Activated naive CD4-positive, alpha-beta T cell treated with anti-CD3 and anti-CD28 coated beads for 36 hours (primary cell): ENCODE measurements at regions of chr19 and their contacts with region 1.

Region 1: GRCh38 chr19:50933640-50934039 is 19.2 kb downstream of the KLK5 start:
- DNase-seq: no peak
- H3K4me3 Mint-ChIP-seq: no peak overlapping the region
- H3K27ac Mint-ChIP-seq: no peak overlapping the region
- H3K4me1 Mint-ChIP-seq: no peaks in the 10 kb centered on the region
- H3K27me3 Mint-ChIP-seq: peaks cover 39% of the 10 kb centered on the region

Region 2: DNA sequence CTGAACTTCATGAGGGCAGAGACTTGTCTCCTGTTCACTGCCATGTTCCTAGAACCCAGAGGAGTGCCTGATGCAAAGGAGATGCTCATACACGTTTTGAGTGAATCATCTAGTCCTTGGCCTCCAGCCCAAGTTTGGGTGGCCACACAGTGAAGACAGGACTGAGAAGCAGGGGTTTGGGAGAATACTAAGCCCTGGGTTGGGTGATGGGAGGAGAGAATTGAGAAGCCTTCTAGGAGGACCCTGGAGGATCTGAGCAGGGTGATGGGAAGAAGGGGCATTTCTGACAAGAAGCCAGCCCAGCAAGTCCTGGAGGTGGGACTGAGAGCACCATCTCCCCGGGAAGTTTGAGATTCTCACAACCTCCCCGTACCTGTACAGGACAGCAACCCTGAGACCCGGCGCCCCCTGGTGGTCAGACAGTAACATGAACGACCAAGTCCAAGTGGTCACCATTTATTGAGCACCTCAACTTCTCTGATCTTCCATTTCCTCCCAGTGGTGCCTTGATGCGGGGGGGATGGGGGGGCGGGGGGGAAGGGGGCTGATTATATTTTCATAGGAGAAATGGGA is 163.6 kb after region 1 on chr19:
- CTCF ChIA-PET with region 1: interaction called, 3 read pairs
- intact Hi-C with region 1: loop called (anchors 1 kb)
- DNase-seq: peak; percentile 83
- H3K4me3 Mint-ChIP-seq: no peak overlapping the region
- H3K27ac Mint-ChIP-seq: no peak overlapping the region
- H3K4me1 Mint-ChIP-seq: peaks cover 32% of the 10 kb centered on the region
- H3K27me3 Mint-ChIP-seq: no peaks in the 10 kb centered on the region

Region 3: DNA sequence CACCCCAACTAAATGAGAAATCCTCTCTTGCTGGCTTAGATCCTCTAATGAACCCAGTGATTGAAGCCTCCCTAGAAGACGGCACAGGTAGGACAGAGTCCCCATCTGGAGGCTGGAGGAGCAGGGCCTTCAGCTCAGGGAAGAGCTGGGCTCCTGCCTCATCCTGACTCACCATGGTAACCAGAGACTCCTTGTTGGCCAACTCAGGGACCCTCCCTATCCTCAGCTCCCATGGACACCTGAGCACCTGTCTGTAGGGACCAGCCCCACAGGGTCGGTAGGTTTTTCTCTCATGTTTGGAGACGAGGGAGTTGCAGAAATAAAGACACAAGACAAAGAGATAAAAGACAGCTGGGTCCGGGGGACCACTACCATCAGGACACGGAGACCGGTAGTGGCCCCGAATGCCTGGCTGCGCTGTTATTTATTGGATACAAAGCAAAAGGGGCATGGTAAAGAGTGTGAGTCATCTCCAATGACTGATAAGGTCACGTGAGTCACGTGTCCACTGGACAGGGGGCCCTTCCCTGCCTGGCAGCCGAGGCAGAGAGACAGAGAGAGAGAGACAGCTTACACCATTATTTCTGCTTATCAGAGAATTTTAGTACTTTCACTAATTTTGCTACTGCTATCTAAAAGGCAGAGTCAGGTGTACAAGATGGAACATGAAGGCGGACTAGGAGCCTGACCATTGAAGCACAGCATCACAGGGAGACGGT is 235.1 kb after region 1 on chr19:
- CTCF ChIA-PET with region 1: no interaction called
- intact Hi-C with region 1: loop called (anchors 1 kb)
- DNase-seq: no peak
- H3K4me3 Mint-ChIP-seq: no peak overlapping the region
- H3K27ac Mint-ChIP-seq: no peak overlapping the region
- H3K4me1 Mint-ChIP-seq: peaks cover 18% of the 10 kb centered on the region
- H3K27me3 Mint-ChIP-seq: peaks cover 4% of the 10 kb centered on the region